Head of caudate nucleus (tissue), 42 donors: ENCODE measurements at regions of chr14 and their contacts with region 1.

Region 1: GRCh38 chr14:56487090-56487667 is 92.4 kb upstream of the TMEM260 start:
- DNase-seq: peak in 1 of 42 donors; percentile 4

Region 2: DNA sequence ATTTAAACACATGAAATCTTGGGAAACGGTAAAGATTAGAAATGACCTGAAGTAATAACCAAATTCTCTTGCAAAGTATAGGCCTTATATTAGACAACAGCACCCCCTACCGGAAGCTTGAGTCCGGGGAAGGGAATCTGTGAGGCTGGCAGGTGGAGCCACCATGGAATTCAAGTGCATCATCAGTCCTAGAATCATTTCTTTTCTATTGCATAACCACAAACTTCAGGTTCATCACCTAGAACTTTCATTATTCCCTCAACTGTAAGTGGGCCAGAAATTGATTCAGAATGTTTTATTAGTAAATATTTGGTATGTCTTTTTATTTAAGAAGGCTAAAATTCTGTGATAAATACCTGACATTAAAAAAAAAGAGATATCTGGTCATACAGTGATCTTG is 830.1 kb after region 1 on chr14:
- intact Hi-C with region 1: loop called (anchors 10 kb)
- DNase-seq: peak; percentile 45 to 92 (median 78)